ENCODE measurements at regions of chr5 and their contacts with region 1.

Region 1: GRCh38 chr5:142881076-142881783 is 111.1 kb downstream of the ARHGAP26 start:
- DNase-seq: no peak
- ATAC-seq: peak; percentile 55
- H3K4me3 ChIP-seq: no peak overlapping the region
- H3K27ac ChIP-seq: no peak overlapping the region
- H3K4me1 ChIP-seq: no peaks in the 10 kb centered on the region
- H3K27me3 ChIP-seq: no peaks in the 10 kb centered on the region
- CTCF ChIP-seq: no peak
- EP300 ChIP-seq: no peak
- POLR2A ChIP-seq: no peak
- RAD21 ChIP-seq: no peak

Region 2: DNA sequence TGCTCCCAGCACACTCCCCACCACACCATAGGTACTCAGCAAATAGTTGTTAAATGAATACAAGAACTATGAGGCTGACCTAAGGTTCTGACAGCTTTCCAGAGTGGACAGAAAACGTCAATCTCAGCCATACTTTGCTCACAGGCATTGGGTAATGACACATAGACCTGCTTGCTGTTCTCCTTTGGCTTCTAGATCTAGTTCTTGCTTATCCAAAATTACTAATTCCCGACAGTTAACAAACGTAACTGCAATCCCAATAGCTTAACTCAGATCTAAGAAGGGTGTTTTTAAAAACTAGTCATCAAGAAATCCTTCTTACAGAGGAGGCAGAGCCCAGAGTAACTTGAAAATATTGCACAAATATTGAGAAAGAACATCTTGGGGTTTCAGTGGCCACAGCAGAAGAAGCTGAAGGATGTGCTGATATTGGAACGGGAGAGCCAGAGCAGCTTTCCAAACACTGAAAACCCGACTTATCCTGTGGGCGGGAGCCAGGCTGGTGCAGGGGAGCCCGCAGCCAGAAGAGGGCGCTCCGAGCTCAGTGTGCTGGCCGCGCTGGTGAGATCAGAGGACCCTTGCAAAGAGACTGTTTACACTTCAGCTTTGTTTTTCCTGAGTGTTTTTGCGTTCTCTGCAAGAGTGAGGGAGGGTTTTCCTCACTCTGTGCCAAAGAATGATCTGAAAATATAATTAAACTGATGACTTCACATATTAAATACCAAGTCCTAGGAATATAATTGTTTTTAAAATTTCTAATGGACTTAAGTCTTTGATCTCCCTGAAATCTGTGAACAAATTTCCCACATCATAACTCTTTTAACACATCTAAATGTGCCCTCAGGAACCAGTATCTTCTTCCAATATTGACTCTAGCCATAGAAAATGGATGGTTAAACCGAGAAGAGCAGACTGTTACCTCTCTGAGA is 225.6 kb before region 1 on chr5:
- CTCF ChIA-PET with region 1: interaction called, 43 read pairs
- POLR2A ChIA-PET with region 1: no interaction called
- RAD21 ChIA-PET with region 1: interaction called, 3 read pairs
- SMC1A ChIA-PET with region 1: interaction called, 5 read pairs
- in situ Hi-C with region 1: no loop called
- intact Hi-C with region 1: no loop called
- DNase-seq: no peak
- ATAC-seq: peak; percentile 98
- H3K4me3 ChIP-seq: no peak overlapping the region
- H3K27ac ChIP-seq: no peak overlapping the region
- H3K4me1 ChIP-seq: no peaks in the 10 kb centered on the region
- H3K27me3 ChIP-seq: peaks cover 0 to 1% of the 10 kb centered on the region in 2 experiments; a peak in 2 of 4 replicates
- CTCF ChIP-seq: peak; percentile 86 to 96 (median 94)
- EP300 ChIP-seq: no peak
- POLR2A ChIP-seq: no peak
- RAD21 ChIP-seq: peak; percentile 78

Region 3: DNA sequence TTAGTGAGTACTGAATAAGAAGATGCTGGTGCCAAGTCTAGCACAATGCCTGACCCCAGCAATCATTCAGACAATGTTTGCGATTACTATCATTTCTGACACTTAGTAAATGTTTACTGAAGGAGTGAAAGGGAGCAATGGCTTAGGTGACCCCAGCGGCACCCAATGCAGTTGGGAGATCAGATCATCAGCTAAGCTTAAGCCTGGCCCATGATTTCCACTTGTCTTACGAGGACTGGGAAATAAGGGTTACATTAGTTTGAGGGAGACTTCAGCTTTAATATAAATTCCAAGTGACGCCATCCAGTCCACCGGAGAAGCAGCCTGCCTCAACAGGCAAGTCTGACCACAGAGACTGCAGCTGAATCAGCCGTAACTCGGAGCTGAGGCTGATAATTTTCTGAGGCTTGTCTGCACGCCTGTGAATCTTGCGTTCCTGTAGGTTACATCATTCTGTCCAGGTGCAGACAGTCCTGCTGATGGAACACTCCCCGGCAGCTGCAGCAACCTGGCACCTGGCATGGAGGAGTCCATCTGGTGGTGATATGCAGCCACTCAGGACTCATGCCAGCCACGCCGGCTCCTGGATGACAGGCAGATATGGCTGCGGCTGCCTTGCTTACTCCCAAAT is 160.5 kb before region 1 on chr5:
- CTCF ChIA-PET with region 1: interaction called, 243 read pairs
- POLR2A ChIA-PET with region 1: no interaction called
- RAD21 ChIA-PET with region 1: interaction called, 5 read pairs
- SMC1A ChIA-PET with region 1: interaction called, 21 read pairs
- in situ Hi-C with region 1: loop called (anchors 5 kb)
- intact Hi-C with region 1: loop called (anchors 1 kb)
- DNase-seq: no peak
- ATAC-seq: no peak
- H3K4me3 ChIP-seq: no peak overlapping the region
- H3K27ac ChIP-seq: no peak overlapping the region
- H3K4me1 ChIP-seq: no peaks in the 10 kb centered on the region
- H3K27me3 ChIP-seq: no peaks in the 10 kb centered on the region; a peak in 1 of 4 replicates
- CTCF ChIP-seq: no peak
- EP300 ChIP-seq: no peak
- POLR2A ChIP-seq: no peak
- RAD21 ChIP-seq: no peak

Region 4: GRCh38 chr5:142896325-142897007 is 15.2 kb after region 1 on chr5:
- CTCF ChIA-PET with region 1: interaction called, 12 read pairs
- POLR2A ChIA-PET with region 1: no interaction called
- RAD21 ChIA-PET with region 1: no interaction called
- SMC1A ChIA-PET with region 1: no interaction called
- in situ Hi-C with region 1: no loop called
- intact Hi-C with region 1: no loop called
- DNase-seq: no peak
- ATAC-seq: no peak
- H3K4me3 ChIP-seq: no peak overlapping the region
- H3K27ac ChIP-seq: no peak overlapping the region
- H3K4me1 ChIP-seq: no peaks in the 10 kb centered on the region
- H3K27me3 ChIP-seq: no peaks in the 10 kb centered on the region
- CTCF ChIP-seq: no peak
- EP300 ChIP-seq: no peak
- POLR2A ChIP-seq: no peak
- RAD21 ChIP-seq: no peak

Measured in GM12878 (cell line).